ENCODE measurements at regions of chr13 and their contacts with region 1.

Region 1: DNA sequence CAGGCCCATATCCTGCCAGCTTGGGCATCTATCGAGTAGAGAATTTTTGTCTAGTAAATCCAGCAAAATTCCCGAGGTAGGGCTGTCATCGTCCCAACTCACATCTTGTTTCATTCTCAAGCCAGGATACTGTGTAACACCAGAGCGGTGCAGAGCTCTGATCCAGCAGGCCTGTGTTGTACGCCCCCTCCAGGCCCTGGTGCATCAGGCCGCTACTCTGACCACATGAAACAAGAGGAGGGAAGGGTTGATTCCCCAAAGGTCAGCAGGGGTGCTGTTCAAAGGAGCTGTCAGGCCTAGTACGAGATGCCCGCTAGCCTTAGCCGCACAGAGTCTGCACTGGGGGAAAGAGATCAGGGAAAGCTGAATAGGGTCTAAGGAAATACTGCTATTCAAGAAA is 276.0 kb downstream of the SLC7A1 start:
- DNase-seq: no peak
- H3K4me3 ChIP-seq: no peak overlapping the region
- H3K27ac ChIP-seq: no peak overlapping the region
- H3K4me1 ChIP-seq: no peaks in the 10 kb centered on the region
- H3K27me3 ChIP-seq: no peaks in the 10 kb centered on the region; the same call in 1 of the 2 replicates

Region 2: GRCh38 chr13:28058866-28059624 is 1260.4 kb before region 1 on chr13:
- in situ Hi-C with region 1: loop called (anchors 25 kb)
- DNase-seq: peak; percentile 45
- H3K4me3 ChIP-seq: no peak overlapping the region
- H3K27ac ChIP-seq: no peak overlapping the region
- H3K4me1 ChIP-seq: no peaks in the 10 kb centered on the region
- H3K27me3 ChIP-seq: peaks cover 19% of the 10 kb centered on the region

Region 3: GRCh38 chr13:28297341-28297740 is 1022.1 kb before region 1 on chr13:
- in situ Hi-C with region 1: no loop called
- DNase-seq: no peak
- H3K4me3 ChIP-seq: no peak overlapping the region
- H3K27ac ChIP-seq: no peak overlapping the region
- H3K4me1 ChIP-seq: no peaks in the 10 kb centered on the region
- H3K27me3 ChIP-seq: no peaks in the 10 kb centered on the region

Region 4: GRCh38 chr13:29484236-29484635 is 164.8 kb after region 1 on chr13:
- in situ Hi-C with region 1: no loop called
- DNase-seq: no peak
- H3K4me3 ChIP-seq: no peak overlapping the region
- H3K27ac ChIP-seq: no peak overlapping the region
- H3K4me1 ChIP-seq: no peaks in the 10 kb centered on the region
- H3K27me3 ChIP-seq: no peaks in the 10 kb centered on the region